Activated T-helper 1 cell treated with anti-CD3 and anti-CD28 coated beads, Interleukin-12 subunit alpha, Interleukin-12 subunit beta, Interleukin-2, Interleukin-4 antibody, amounts not matched to agents 30 ng/mL and 10 ng/mL and 1 ng/mL, durations not matched to agents 14 hours and 24 hours and 36 hours (primary cell): ENCODE measurements at regions of chr1 and their contacts with region 1.

Region 1: GRCh38 chr1:89524369-89525168 is at the start of gene LRRC8B:
- DNase-seq: peak; percentile 89
- H3K4me3 Mint-ChIP-seq: no peak within 1 kb of the TSS
- H3K27ac Mint-ChIP-seq: no peak within 1 kb of the TSS
- H3K4me1 Mint-ChIP-seq: peaks cover 36% of the 10 kb centered on the region
- H3K27me3 Mint-ChIP-seq: no peaks in the 10 kb centered on the region
- total RNA-seq, gene LRRC8B: 62.3 and 69.9 TPM in 2 replicates

Region 2: DNA sequence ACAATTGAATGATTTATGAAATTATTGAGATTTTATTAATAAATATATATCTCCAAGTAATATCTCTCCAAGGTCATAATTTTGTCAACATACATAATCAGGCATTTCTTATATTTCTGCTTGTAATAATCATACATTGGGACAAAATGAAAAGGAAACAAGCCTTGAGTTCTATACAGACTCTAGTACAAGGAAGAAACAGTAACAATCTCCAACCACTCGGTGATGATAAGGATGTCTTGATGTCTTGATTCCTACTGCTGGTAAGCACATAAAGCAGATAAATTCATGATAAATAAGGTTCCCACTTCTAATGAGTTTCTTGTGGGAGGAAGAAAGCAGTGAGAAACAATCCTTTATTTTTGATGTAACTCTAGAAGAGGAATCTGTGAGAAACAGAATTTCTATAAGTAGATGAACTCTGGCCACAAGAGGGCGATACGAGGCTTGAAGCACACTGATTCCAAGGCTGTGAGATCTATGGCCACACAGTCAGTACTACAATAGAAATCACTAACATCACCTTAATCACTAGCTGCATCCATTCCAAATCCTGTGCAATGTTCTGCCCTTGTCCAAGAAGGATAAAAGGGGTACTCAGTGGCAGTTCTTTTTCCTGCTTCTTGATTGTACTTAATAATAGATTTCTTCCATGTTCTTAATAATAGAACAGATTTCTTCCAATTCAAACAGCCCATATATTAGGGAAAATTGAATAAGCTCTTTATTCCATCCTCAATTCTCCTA is 41.4 kb before region 1 on chr1:
- intact Hi-C with region 1: loop called (anchors 1 kb)
- DNase-seq: peak; percentile 58
- H3K4me3 Mint-ChIP-seq: no peak overlapping the region
- H3K27ac Mint-ChIP-seq: no peak overlapping the region
- H3K4me1 Mint-ChIP-seq: peaks cover 25% of the 10 kb centered on the region
- H3K27me3 Mint-ChIP-seq: peaks cover 2% of the 10 kb centered on the region

Region 3: GRCh38 chr1:89545264-89546038 is 20.9 kb after region 1 on chr1:
- intact Hi-C with region 1: loop called (anchors 1 kb)
- DNase-seq: peak; percentile 39
- H3K4me3 Mint-ChIP-seq: peak overlapping the region; percentile 12
- H3K27ac Mint-ChIP-seq: peak overlapping the region; percentile 90
- H3K4me1 Mint-ChIP-seq: peaks cover 85% of the 10 kb centered on the region
- H3K27me3 Mint-ChIP-seq: peaks cover 2% of the 10 kb centered on the region

Region 4: GRCh38 chr1:89598450-89599331 is 74.1 kb after region 1 on chr1:
- intact Hi-C with region 1: loop called (anchors 1 kb)
- DNase-seq: no peak
- H3K4me3 Mint-ChIP-seq: no peak overlapping the region
- H3K27ac Mint-ChIP-seq: peak overlapping the region; percentile 50
- H3K4me1 Mint-ChIP-seq: peaks cover 85% of the 10 kb centered on the region
- H3K27me3 Mint-ChIP-seq: no peaks in the 10 kb centered on the region

Region 5: DNA sequence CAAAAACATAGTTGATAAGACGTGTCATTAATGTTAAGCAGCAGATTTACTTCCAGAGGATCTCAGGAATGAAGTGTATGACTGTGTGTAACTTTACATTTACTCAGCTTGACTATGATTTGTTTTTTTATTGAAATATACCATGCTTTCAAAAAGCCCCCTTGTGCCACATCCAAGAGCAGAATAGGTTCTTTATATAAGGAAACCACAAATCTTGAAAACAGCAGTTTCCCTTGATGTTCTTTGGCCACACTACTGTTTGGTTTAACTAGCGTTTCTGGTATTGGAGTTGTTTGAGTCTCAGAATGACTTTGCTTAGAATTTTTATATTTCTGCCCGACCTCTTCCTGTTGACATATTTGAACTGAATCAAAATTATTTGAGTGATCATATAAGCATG is 133.3 kb after region 1 on chr1:
- intact Hi-C with region 1: loop called (anchors 1 kb)
- DNase-seq: peak; percentile 24
- H3K4me3 Mint-ChIP-seq: peak overlapping the region; percentile 62
- H3K27ac Mint-ChIP-seq: peak overlapping the region; percentile 72
- H3K4me1 Mint-ChIP-seq: peaks cover 91% of the 10 kb centered on the region
- H3K27me3 Mint-ChIP-seq: no peaks in the 10 kb centered on the region

Region 6: DNA sequence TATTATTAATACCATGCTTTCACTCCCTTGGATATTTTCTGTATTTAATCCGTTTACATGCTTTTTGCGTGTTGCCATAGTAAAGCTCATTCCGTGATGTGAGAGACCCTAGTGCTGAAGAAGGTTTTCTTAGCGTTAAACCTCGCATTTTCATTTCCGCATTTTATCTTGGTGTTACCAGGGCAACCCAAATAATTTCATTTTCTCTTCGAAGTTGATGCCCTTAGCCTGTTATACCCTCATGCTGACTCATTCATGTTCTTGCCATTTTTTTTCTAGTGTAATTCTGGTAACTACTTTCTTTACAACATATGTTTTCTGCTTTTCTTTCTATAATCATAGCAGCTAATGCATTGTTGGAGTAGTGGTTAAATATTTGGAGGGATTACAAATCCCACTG is 145.6 kb after region 1 on chr1:
- intact Hi-C with region 1: no loop called
- DNase-seq: no peak
- H3K4me3 Mint-ChIP-seq: peak overlapping the region; percentile 32
- H3K27ac Mint-ChIP-seq: peak overlapping the region; percentile 79
- H3K4me1 Mint-ChIP-seq: peaks cover 86% of the 10 kb centered on the region
- H3K27me3 Mint-ChIP-seq: no peaks in the 10 kb centered on the region

Region 7: DNA sequence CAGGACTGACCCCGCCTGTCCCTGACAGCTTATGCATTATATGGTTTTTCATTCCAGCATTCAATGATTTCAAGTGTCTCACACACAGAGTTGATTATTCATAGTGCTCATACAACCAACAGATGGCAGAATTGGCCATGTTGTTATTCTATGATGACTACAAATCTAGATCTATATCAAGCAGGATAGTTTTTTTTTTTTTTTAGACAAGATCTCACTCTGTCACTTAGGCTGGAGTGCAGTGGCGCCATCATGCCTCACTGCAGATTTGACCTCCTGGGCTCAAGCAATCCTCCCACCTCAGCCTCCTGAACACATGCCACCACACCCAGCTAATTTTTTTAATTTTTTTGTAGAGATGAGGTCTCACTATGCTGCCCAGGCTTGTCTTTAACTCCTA is 256.2 kb after region 1 on chr1:
- intact Hi-C with region 1: loop called (anchors 1 kb)
- DNase-seq: no peak
- H3K4me3 Mint-ChIP-seq: peak overlapping the region; percentile 59
- H3K27ac Mint-ChIP-seq: peak overlapping the region; percentile 97
- H3K4me1 Mint-ChIP-seq: peaks cover 48% of the 10 kb centered on the region
- H3K27me3 Mint-ChIP-seq: peaks cover 4% of the 10 kb centered on the region